IMR-90 (cell line): ENCODE measurements at regions of chr1 and their contacts with region 1.

Region 1: DNA sequence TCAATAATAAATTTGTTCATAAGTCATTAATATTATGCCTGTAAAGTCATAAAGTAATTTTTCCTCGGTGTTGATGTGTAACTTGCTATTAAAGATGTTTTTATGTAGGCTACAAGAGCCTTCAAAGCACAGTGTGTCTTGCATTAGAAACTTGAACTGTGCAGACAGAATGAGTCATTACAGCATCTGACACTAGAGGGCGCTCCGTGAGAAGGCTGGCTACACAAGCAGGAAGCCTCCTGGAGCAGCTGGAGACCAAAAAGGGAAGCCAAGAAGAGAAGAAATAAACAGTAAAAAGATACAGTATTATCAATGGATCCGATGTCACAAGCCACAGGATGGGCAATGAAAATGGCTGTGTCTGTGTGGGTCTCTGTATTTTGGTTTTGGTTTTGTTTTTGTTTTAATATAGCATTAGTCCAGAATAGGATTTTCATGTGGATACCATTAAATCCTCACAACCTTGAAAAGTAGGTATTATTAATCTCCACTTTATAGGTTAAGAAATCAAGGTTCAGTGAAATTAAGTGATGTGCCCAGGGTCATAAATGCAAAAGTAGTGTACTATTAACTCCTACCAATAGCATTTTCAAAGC is 16.1 kb upstream of the LRRC8D start:
- DNase-seq: peak; percentile 87
- ATAC-seq: peak; percentile 92
- H3K4me3 ChIP-seq: no peak overlapping the region
- H3K27ac ChIP-seq: no peak overlapping the region
- H3K4me1 ChIP-seq: peaks cover 9% of the 10 kb centered on the region
- H3K27me3 ChIP-seq: no peaks in the 10 kb centered on the region
- CTCF ChIP-seq: peak; percentile 96
- POLR2A ChIP-seq: 0 out of 2 replicates have a peak, but pooled peaks have one; percentile 36
- RAD21 ChIP-seq: peak; percentile 97

Region 2: DNA sequence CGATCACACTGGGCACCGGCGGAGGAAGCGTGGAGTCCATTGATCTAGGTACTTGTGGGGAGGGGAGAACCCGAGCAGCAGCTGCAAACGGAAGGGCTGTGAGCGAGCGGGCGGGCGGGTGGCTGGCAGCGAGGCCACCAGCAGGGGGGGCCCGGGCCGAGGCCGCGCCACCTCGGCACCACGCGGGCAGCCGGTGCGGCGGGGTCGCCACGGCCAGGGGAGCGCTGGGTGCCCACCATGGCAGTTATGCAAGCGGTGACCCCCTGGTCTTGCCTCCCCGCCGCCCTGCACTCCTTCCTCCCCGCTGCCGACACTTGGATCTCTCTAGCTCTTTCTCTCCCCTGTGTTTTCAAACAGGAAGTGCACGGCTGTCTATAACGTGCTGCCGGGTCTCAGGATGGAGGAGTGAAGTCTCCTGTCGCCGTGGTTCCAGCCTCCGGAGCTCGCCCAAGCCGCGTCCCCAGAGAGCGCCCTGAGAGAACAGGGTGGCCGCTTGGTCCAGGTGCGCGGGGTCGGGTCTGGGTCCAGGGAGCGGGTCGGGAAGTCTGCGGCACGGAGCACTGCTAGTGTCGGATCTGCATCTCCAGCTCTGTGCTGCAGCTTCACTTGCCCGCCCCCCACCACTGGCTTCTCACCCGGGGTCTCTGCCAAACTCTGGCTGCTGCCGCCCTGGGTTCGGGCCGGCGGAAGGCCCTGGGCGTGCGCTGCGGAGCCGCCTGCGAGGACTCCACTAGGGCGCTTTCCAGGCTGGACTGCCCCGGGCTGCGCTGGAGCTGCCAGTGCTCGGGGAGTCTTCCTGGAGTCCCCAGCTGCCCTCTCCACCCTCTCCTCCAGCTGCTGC is 38.8 kb after region 1 on chr1:
- CTCF ChIA-PET with region 1: no interaction called
- POLR2A ChIA-PET with region 1: no interaction called
- dilution Hi-C with region 1: no loop called
- in situ Hi-C with region 1: no loop called
- intact Hi-C with region 1: loop called (anchors 2 kb)
- DNase-seq: peak; percentile 66
- ATAC-seq: peak; percentile 87
- H3K4me3 ChIP-seq: peak overlapping the region; percentile 93
- H3K27ac ChIP-seq: peak overlapping the region; percentile 92
- H3K4me1 ChIP-seq: peaks cover 6% of the 10 kb centered on the region
- H3K27me3 ChIP-seq: no peaks in the 10 kb centered on the region
- CTCF ChIP-seq: peak; percentile 64
- POLR2A ChIP-seq: 0 out of 2 replicates have a peak, but pooled peaks have one; percentile 34
- RAD21 ChIP-seq: peak; percentile 69

Region 3: DNA sequence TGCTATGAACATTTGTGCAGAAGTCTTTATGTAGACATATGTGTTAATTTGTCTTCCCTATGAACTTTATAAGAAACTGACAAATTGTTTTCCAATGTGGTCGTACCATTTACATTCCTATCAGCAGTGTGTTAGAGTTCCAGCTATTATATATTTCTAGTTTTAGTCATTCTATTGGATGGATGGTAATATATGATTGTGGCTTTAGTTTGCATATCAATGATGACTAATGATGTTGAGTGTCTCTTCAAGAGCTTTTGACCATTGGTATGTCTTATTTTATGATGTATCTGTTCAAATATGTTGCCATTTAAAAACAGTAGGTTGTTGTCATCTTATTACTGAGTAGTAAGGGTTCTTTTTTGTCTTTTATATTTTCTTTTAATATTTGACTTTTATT is 174.0 kb after region 1 on chr1:
- CTCF ChIA-PET with region 1: interaction called, 10 read pairs
- POLR2A ChIA-PET with region 1: no interaction called
- dilution Hi-C with region 1: no loop called
- in situ Hi-C with region 1: no loop called
- intact Hi-C with region 1: no loop called
- DNase-seq: peak; percentile 74
- ATAC-seq: peak; percentile 48
- H3K4me3 ChIP-seq: no peak overlapping the region
- H3K27ac ChIP-seq: no peak overlapping the region
- H3K4me1 ChIP-seq: peaks cover 12% of the 10 kb centered on the region
- H3K27me3 ChIP-seq: no peaks in the 10 kb centered on the region
- CTCF ChIP-seq: no peak
- POLR2A ChIP-seq: no peak
- RAD21 ChIP-seq: no peak

Region 4: GRCh38 chr1:89994805-89995597 is 190.3 kb after region 1 on chr1 and contains the start of gene ZNF326:
- CTCF ChIA-PET with region 1: interaction called, 9 read pairs
- POLR2A ChIA-PET with region 1: no interaction called
- dilution Hi-C with region 1: no loop called
- in situ Hi-C with region 1: loop called (anchors 5 kb)
- intact Hi-C with region 1: no loop called
- DNase-seq: peak; percentile 97
- ATAC-seq: peak; percentile 96
- H3K4me3 ChIP-seq: peak within 1 kb of the TSS; percentile 89
- H3K27ac ChIP-seq: peak within 1 kb of the TSS; percentile 95
- H3K4me1 ChIP-seq: no peaks in the 10 kb centered on the region; the same call in 1 of the 2 replicates
- H3K27me3 ChIP-seq: no peaks in the 10 kb centered on the region
- CTCF ChIP-seq: no peak
- POLR2A ChIP-seq: peak; percentile 98
- RAD21 ChIP-seq: no peak
- total RNA-seq, gene ZNF326: 4.5 and 10.0 TPM in 2 replicates